ENCODE measurements at regions of chr13 and their contacts with region 1.

Region 1: GRCh38 chr13:37869756-37870488 is at the start of gene TRPC4:
- DNase-seq: peak; percentile 76
- ATAC-seq: peak; percentile 68
- H3K4me3 Mint-ChIP-seq: peak within 1 kb of the TSS; percentile 97
- H3K27ac Mint-ChIP-seq: peak within 1 kb of the TSS; percentile 66
- H3K4me1 Mint-ChIP-seq: peaks cover 30% of the 10 kb centered on the region
- H3K27me3 Mint-ChIP-seq: peaks cover 21% of the 10 kb centered on the region
- CTCF ChIP-seq: peak; percentile 54; the same call in 1 of the 2 replicates
- total RNA-seq, gene TRPC4: 4.2 to 8.0 TPM (median 5.0 TPM) in 3 replicates

Region 2: GRCh38 chr13:37914781-37915391 is 45.0 kb after region 1 on chr13:
- CTCF ChIA-PET with region 1: interaction called, 18 read pairs
- POLR2A ChIA-PET with region 1: no interaction called
- DNase-seq: no peak
- ATAC-seq: peak; percentile 84
- H3K4me3 Mint-ChIP-seq: peak overlapping the region; percentile 83
- H3K27ac Mint-ChIP-seq: peak overlapping the region; percentile 88
- H3K4me1 Mint-ChIP-seq: peaks cover 68% of the 10 kb centered on the region
- H3K27me3 Mint-ChIP-seq: no peaks in the 10 kb centered on the region
- CTCF ChIP-seq: no peak

Region 3: GRCh38 chr13:37934339-37935191 is 64.6 kb after region 1 on chr13:
- CTCF ChIA-PET with region 1: interaction called, 25 read pairs
- POLR2A ChIA-PET with region 1: no interaction called
- DNase-seq: peak; percentile 25
- ATAC-seq: peak; percentile 87
- H3K4me3 Mint-ChIP-seq: peak overlapping the region; percentile 29; the same call in 1 of the 2 replicates
- H3K27ac Mint-ChIP-seq: peak overlapping the region; percentile 55
- H3K4me1 Mint-ChIP-seq: peaks cover 36% of the 10 kb centered on the region
- H3K27me3 Mint-ChIP-seq: no peaks in the 10 kb centered on the region
- CTCF ChIP-seq: no peak

Region 4: GRCh38 chr13:38045307-38046048 is 175.6 kb after region 1 on chr13:
- CTCF ChIA-PET with region 1: interaction called, 26 read pairs
- POLR2A ChIA-PET with region 1: interaction called, 3 read pairs
- DNase-seq: no peak
- ATAC-seq: peak; percentile 92
- H3K4me3 Mint-ChIP-seq: no peak overlapping the region
- H3K27ac Mint-ChIP-seq: no peak overlapping the region
- H3K4me1 Mint-ChIP-seq: peaks cover 6% of the 10 kb centered on the region
- H3K27me3 Mint-ChIP-seq: no peaks in the 10 kb centered on the region; the same call in 1 of the 2 replicates
- CTCF ChIP-seq: peak; percentile 58

Region 5: DNA sequence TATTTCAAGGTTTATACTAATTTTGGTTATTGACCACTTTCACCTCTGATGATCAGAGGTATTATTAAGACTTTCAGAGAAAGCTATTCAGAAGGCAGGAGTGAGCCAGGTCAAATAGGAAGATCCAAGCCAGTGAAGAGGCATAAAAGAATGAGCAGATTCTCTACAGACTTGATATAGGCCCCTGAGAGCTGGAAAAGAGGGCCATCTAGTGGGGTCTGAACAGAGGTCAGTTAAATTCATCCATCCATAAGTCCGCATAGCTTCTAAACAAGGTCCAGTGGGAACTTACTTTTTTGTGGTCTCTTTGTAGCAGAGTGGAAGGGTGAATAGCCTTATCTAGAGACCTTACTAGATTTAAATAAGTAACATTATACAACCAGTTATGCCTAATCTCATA is 353.2 kb after region 1 on chr13:
- CTCF ChIA-PET with region 1: interaction called, 29 read pairs
- POLR2A ChIA-PET with region 1: no interaction called
- DNase-seq: peak; percentile 44
- ATAC-seq: peak; percentile 97
- H3K4me3 Mint-ChIP-seq: no peak overlapping the region
- H3K27ac Mint-ChIP-seq: no peak overlapping the region
- H3K4me1 Mint-ChIP-seq: 0 out of 2 replicates have a peak, but pooled peaks cover 1% of the 10 kb centered on the region
- H3K27me3 Mint-ChIP-seq: no peaks in the 10 kb centered on the region
- CTCF ChIP-seq: no peak

Measured in WTC11 (cell line).